Mucosa of descending colon (tissue), 3 donors: ENCODE measurements at regions of chr3 and their contacts with region 1.

Region 1: GRCh38 chr3:47420511-47421484 is 40.0 kb downstream of the PTPN23 start:
- DNase-seq: peak; percentile 86 to 98 (median 93)
- ATAC-seq: peak; percentile 86
- H3K4me3 ChIP-seq: no peak overlapping the region
- H3K4me1 ChIP-seq: peaks cover 28% of the 10 kb centered on the region
- CTCF ChIP-seq: peak; percentile 71

Region 2: DNA sequence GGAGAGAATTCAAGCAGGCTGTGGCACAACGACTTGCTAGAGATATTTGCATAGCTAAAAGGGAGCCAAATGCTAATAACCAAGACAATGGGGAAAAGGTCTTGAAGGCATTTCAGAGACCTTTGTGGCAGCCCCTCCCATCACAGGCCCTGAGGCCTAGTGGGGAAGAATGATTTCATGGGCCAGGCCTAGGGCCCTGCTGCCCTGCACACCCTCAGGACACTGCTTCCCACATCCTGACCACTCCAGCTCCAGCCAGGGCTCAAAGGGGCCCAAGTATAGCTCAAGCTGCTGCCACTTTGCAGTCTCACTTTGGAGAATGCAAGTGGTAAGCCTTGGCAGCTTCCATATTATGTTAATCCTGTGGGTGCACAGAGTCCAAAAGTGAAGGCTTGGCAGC is 61.5 kb before region 1 on chr3:
- intact Hi-C with region 1: no loop called
- DNase-seq: no peak
- ATAC-seq: no peak
- H3K4me3 ChIP-seq: no peak overlapping the region
- H3K4me1 ChIP-seq: no peaks in the 10 kb centered on the region
- CTCF ChIP-seq: no peak

Region 3: DNA sequence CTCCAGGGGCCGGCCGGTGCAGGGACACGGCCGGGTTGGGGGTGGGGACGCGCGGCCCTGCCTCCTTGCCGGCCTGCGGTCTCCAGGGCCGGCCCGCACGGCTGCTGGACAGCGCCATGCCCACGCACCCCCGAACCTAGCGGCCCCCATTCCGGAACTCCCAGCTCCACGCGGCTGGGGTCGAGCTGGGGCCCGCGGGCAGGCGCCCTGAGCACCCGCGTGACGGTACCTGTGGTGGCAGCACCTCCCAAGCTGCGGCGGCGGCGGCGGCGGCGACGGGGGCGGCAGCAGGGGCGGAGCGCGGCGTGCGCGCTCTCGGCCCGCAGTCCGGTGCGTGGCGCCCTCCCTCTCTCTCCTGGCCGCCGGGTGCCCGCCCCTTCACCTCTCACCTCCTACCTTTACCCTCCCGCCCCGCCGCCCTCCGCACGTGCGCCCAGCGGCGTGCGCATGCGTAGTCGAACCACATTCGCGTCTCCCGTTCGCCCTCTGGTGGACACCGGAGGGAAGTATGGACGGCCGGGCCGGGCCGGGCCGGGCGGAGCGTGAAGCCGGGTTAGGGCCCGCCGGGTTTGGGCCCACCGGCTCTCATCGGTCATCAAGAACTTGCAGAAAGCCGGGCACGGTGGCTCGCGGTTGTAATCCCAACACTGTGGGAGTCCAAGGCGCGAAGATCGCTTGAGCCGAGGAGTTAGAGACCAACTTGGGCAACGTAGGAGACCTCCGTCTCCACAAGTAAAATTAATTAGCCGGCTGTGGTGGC is 55.0 kb after region 1 on chr3 and contains the start of gene SCAP:
- intact Hi-C with region 1: loop called (anchors 2 to 10 kb)
- DNase-seq: peak; percentile 95 to 96 (median 96)
- ATAC-seq: peak; percentile 99
- H3K4me3 ChIP-seq: peak within 1 kb of the TSS; percentile 90
- H3K4me1 ChIP-seq: peaks cover 18% of the 10 kb centered on the region
- CTCF ChIP-seq: peak; percentile 81
- total RNA-seq, gene SCAP: 107 to 151 (median 115) TPM

Region 4: GRCh38 chr3:47485812-47486211 is 65.0 kb after region 1 on chr3:
- intact Hi-C with region 1: no loop called
- DNase-seq: no peak
- ATAC-seq: no peak
- H3K4me3 ChIP-seq: no peak overlapping the region
- H3K4me1 ChIP-seq: no peaks in the 10 kb centered on the region
- CTCF ChIP-seq: no peak